PC-9 (cell line): ENCODE measurements at regions of chr20 and their contacts with region 1.

Region 1: GRCh38 chr20:11267131-11267761 is 593.4 kb upstream of the JAG1 start:
- DNase-seq: peak; percentile 62 to 84
- H3K4me3 ChIP-seq: peak overlapping the region; percentile 19; the same call in 1 of the 2 replicates
- H3K27ac ChIP-seq: peak overlapping the region; percentile 61
- H3K4me1 ChIP-seq: peaks cover 21% of the 10 kb centered on the region
- H3K27me3 ChIP-seq: no peaks in the 10 kb centered on the region
- CTCF ChIP-seq: no peak

Region 2: GRCh38 chr20:10476319-10476724 is 790.9 kb before region 1 on chr20:
- CTCF ChIA-PET with region 1: no interaction called
- POLR2A ChIA-PET with region 1: interaction called, 27 read pairs
- intact Hi-C with region 1: no loop called
- DNase-seq: no peak
- H3K4me3 ChIP-seq: no peak overlapping the region
- H3K27ac ChIP-seq: no peak overlapping the region
- H3K4me1 ChIP-seq: no peaks in the 10 kb centered on the region
- H3K27me3 ChIP-seq: no peaks in the 10 kb centered on the region
- CTCF ChIP-seq: no peak

Region 3: DNA sequence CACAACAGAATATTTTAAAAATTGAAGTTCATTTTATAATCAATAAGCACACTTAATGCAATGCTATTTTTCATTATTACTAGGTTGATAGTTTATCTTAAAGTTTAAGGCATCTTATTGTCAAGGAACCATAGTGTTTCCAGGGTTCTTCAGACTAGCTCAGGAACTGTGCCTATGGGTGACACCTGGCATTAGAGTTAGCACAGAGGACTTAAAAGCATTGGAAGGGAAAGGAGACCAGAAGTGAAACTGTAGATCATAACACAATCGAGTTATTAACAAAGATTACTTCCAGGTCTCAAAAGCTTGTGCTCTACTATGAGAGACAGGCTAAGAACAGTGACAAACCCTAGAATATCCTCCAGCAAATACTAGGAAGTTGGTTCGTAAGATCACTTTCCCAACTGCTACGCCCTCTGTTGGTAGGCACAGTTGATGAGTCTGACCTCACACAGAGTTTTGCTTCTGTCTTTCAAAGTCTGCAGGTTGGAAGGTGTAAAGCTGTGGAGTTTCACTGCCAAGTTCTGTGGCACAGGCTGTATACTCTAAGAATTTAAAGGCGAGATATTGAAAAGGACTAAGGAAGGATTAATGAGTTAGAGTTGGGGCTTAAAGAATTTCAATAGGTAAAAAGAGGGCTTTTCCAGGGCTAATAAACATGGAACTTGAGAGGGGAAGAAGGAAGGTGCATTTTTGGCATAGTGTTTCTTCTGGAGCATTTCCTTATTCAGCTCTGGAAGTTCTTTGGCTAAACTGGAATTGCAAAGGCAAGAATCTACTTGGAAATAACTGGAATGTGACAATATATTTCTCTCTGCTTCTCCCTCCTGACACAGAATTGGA is 62.1 kb before region 1 on chr20:
- CTCF ChIA-PET with region 1: interaction called, 10 read pairs
- POLR2A ChIA-PET with region 1: no interaction called
- intact Hi-C with region 1: loop called (anchors 1 kb)
- DNase-seq: peak in 1 of 2 experiments; percentile 54
- H3K4me3 ChIP-seq: no peak overlapping the region
- H3K27ac ChIP-seq: no peak overlapping the region
- H3K4me1 ChIP-seq: peaks cover 7% of the 10 kb centered on the region; the same call in 1 of the 2 replicates
- H3K27me3 ChIP-seq: no peaks in the 10 kb centered on the region
- CTCF ChIP-seq: peak; percentile 68

Region 4: DNA sequence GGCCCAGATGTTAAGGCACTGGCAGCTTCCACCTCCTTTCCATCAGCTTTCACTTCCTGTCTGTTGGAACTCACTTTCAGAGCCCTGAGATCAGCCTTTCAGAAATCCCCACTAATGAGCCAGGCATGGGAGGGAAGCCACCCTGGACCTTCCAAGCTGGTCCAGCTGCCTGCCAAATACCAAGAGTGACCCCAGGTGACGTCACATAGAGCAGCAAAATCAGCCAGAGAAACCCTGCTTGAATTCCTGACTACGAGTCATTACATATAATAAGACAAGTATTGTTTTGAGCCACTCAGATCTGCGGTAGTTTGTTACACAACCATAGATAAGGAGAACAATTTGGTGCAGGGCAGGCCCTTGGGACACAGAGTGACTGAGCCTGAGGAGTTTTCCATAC is 37.5 kb before region 1 on chr20:
- CTCF ChIA-PET with region 1: no interaction called
- POLR2A ChIA-PET with region 1: no interaction called
- intact Hi-C with region 1: loop called (anchors 2 kb)
- DNase-seq: peak; percentile 74 to 88
- H3K4me3 ChIP-seq: peak overlapping the region; percentile 14; the same call in 1 of the 2 replicates
- H3K27ac ChIP-seq: peak overlapping the region; percentile 44
- H3K4me1 ChIP-seq: peaks cover 17% of the 10 kb centered on the region
- H3K27me3 ChIP-seq: no peaks in the 10 kb centered on the region
- CTCF ChIP-seq: no peak

Region 5: GRCh38 chr20:11285165-11285564 is 17.9 kb after region 1 on chr20:
- CTCF ChIA-PET with region 1: no interaction called
- POLR2A ChIA-PET with region 1: no interaction called
- intact Hi-C with region 1: no loop called
- DNase-seq: no peak
- H3K4me3 ChIP-seq: no peak overlapping the region
- H3K27ac ChIP-seq: no peak overlapping the region
- H3K4me1 ChIP-seq: no peaks in the 10 kb centered on the region
- H3K27me3 ChIP-seq: no peaks in the 10 kb centered on the region
- CTCF ChIP-seq: no peak